ENCODE measurements at regions of chr9 and their contacts with region 1.

Region 1: GRCh38 chr9:89743573-89744361 is 139.0 kb downstream of the GADD45G start:
- DNase-seq: no peak

Region 2: DNA sequence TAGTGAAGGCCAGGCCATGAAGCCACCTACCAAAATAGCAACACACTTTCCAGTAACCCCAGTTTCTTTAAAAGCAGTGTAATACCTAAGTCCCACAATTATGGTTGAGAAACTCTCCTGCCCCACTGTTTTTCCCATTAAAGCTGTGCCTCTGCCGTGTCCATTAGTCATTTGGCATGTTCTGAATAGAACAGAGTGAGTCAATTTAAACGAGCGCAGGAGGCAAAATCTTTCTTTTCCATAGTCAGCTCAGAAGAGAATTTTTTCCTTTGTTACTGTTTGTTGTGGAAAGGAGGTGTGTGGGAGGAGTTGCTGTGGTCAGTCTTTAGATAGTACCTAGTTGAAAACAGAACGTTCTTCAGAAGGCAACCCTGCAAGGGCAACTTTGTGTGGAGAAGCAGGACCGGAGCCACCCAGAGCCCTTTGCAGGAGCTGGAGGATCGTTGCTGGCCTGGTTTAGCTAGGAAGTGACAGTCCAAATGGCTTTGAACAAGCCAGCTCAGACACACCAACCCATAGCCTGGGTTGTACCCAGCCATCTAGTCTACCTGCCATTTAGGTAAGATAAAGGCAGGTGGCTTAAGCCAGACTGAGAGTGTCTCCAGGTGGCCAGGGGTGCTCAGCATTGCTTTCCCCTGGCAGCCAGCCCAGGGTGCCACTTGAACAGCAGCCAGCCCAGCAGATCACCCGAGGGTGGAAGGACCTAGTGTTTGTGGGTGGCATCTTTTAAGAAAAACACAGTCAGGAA is 108.6 kb before region 1 on chr9:
- in situ Hi-C with region 1: loop called (anchors 25 kb)
- DNase-seq: no peak

Region 3: GRCh38 chr9:90086101-90086511 is 342.3 kb after region 1 on chr9:
- in situ Hi-C with region 1: no loop called
- DNase-seq: no peak

Measured in KBM-7 (cell line).